Endothelial cell of umbilical vein (primary cell): ENCODE measurements at regions of chr14 and their contacts with region 1.

Region 1: GRCh38 chr14:78974691-78975090 is 804.5 kb downstream of the NRXN3 start:
- DNase-seq: peak; percentile 88
- H3K4me3 ChIP-seq: no peak overlapping the region
- H3K27ac ChIP-seq: peak overlapping the region; percentile 84
- H3K4me1 ChIP-seq: peaks cover 25% of the 10 kb centered on the region
- H3K27me3 ChIP-seq: no peaks in the 10 kb centered on the region
- CTCF ChIP-seq: no peak
- POLR2A ChIP-seq: no peak

Region 2: DNA sequence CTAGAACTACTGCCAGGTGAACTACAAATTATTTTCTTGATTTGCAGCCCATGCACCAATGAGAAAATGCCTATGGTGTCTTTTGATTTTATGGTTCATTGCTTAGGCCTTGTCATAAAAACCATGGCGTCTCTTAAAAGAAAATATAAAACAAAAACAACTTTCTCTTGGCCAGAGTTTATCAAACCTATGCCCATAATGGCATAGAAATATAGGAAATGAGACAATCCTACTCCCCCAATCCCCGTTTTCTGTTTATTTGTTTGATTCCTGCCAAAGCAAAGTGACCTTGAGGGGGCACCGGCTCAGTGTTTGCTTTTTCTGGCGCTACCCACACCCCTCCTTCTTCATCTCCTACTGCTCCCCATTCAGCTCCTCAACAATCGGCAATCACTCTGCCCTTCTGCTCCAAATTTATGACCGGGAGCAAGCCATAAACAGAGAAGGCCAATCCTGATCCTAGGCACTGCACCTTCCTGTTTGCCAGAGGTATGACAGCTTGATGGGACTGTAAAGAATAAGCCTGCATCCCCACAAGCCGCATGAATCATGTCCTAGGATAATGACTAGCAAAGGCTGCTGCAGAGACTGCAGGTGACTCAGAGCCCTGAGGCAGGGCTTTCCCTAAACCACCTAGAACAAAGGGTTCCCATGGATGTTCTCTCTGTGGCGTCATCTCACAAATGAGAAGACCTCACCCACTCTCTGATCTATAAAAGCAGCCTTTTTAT is 70.4 kb after region 1 on chr14:
- CTCF ChIA-PET with region 1: no interaction called
- POLR2A ChIA-PET with region 1: no interaction called
- dilution Hi-C with region 1: no loop called
- intact Hi-C with region 1: loop called (anchors 1 kb)
- DNase-seq: peak; percentile 86
- H3K4me3 ChIP-seq: peak overlapping the region in 1 of 3 experiments; percentile 18
- H3K27ac ChIP-seq: peak overlapping the region; percentile 82
- H3K4me1 ChIP-seq: peaks cover 14% of the 10 kb centered on the region
- H3K27me3 ChIP-seq: no peaks in the 10 kb centered on the region
- CTCF ChIP-seq: no peak
- POLR2A ChIP-seq: no peak